PC-9 (cell line): ENCODE measurements at regions of chr12 and their contacts with region 1.

Region 1: DNA sequence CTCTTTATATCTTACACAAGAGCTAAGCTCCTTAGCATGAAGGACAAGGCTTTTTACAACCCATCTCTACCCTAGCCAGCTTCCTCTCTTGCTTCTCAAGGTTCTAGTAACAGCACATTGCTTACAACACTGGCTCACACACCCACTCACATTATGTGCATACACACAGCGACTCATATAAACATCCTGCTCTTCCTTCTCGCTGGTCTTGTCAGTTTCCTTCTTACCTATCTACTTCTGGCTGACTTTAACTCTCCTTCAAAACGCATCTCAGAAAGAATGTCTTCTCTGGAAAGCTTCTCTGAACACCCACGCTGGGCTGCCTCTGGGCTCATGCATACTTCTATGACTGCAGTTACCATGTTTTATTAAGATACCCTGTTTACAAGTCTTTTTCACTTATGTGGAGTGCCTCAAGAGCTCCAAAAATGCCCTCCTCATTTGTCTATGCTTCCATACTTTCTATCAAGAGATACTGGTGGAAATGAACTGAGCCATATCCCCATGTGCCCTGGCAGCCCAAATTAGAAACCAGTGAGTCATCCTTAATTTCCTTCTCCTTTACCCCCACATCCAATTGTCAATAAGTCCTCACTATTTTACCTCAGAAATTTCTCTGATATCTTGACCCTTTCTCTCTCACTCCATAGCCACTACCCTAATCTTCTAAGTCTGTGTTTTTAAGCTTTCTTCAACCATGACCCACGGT is 126.9 kb upstream of the KRAS start:
- DNase-seq: no peak
- H3K4me3 ChIP-seq: no peak overlapping the region
- H3K27ac ChIP-seq: no peak overlapping the region
- H3K4me1 ChIP-seq: no peaks in the 10 kb centered on the region
- H3K27me3 ChIP-seq: no peaks in the 10 kb centered on the region
- CTCF ChIP-seq: no peak

Region 2: GRCh38 chr12:25404955-25405354 is 27.3 kb after region 1 on chr12:
- CTCF ChIA-PET with region 1: interaction called, 10 read pairs
- POLR2A ChIA-PET with region 1: no interaction called
- intact Hi-C with region 1: no loop called
- DNase-seq: no peak
- H3K4me3 ChIP-seq: no peak overlapping the region
- H3K27ac ChIP-seq: no peak overlapping the region
- H3K4me1 ChIP-seq: no peaks in the 10 kb centered on the region
- H3K27me3 ChIP-seq: no peaks in the 10 kb centered on the region
- CTCF ChIP-seq: no peak

Region 3: GRCh38 chr12:25447046-25447445 is 69.4 kb after region 1 on chr12:
- CTCF ChIA-PET with region 1: no interaction called
- POLR2A ChIA-PET with region 1: no interaction called
- intact Hi-C with region 1: no loop called
- DNase-seq: no peak
- H3K4me3 ChIP-seq: no peak overlapping the region
- H3K27ac ChIP-seq: no peak overlapping the region
- H3K4me1 ChIP-seq: no peaks in the 10 kb centered on the region
- H3K27me3 ChIP-seq: no peaks in the 10 kb centered on the region
- CTCF ChIP-seq: no peak

Region 4: GRCh38 chr12:25557830-25558436 is 180.3 kb after region 1 on chr12:
- CTCF ChIA-PET with region 1: interaction called, 11 read pairs
- POLR2A ChIA-PET with region 1: no interaction called
- intact Hi-C with region 1: no loop called
- DNase-seq: no peak
- H3K4me3 ChIP-seq: no peak overlapping the region
- H3K27ac ChIP-seq: no peak overlapping the region
- H3K4me1 ChIP-seq: no peaks in the 10 kb centered on the region
- H3K27me3 ChIP-seq: no peaks in the 10 kb centered on the region
- CTCF ChIP-seq: peak; percentile 78